B cell (primary cell): ENCODE measurements at regions of chr12 and their contacts with region 1.

Region 1: DNA sequence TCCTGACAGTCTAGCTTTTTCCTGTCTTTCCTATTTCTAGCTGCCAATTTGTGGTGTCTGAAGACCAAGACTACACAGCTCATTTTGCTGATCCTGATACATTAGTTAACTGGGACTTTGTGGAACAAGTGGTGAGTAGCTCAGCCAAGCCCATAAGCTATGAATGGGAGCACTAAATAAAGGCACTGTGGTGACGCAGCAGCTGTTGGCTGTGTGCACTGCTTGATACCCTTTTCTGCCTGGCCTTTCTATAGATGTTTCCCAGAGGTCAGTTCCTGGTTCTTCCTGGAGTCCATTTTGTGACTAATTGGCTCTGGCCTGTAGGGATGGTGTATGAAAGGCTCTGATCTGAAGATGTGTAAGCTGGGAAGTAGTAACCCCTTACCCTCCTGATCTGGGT is 20.5 kb downstream of the RNF10 start:
- DNase-seq: no peak
- ATAC-seq: no peak
- H3K4me3 ChIP-seq: no peak overlapping the region
- H3K4me3 Mint-ChIP-seq: no peak overlapping the region
- H3K27ac ChIP-seq: no peak overlapping the region
- H3K27ac Mint-ChIP-seq: no peak overlapping the region
- H3K4me1 ChIP-seq: peaks cover 0 to 5% of the 10 kb centered on the region in 2 donors
- H3K4me1 Mint-ChIP-seq: peaks cover 6% of the 10 kb centered on the region
- H3K27me3 ChIP-seq: no peaks in the 10 kb centered on the region
- H3K27me3 Mint-ChIP-seq: no peaks in the 10 kb centered on the region
- CTCF ChIP-seq: no peak

Region 2: DNA sequence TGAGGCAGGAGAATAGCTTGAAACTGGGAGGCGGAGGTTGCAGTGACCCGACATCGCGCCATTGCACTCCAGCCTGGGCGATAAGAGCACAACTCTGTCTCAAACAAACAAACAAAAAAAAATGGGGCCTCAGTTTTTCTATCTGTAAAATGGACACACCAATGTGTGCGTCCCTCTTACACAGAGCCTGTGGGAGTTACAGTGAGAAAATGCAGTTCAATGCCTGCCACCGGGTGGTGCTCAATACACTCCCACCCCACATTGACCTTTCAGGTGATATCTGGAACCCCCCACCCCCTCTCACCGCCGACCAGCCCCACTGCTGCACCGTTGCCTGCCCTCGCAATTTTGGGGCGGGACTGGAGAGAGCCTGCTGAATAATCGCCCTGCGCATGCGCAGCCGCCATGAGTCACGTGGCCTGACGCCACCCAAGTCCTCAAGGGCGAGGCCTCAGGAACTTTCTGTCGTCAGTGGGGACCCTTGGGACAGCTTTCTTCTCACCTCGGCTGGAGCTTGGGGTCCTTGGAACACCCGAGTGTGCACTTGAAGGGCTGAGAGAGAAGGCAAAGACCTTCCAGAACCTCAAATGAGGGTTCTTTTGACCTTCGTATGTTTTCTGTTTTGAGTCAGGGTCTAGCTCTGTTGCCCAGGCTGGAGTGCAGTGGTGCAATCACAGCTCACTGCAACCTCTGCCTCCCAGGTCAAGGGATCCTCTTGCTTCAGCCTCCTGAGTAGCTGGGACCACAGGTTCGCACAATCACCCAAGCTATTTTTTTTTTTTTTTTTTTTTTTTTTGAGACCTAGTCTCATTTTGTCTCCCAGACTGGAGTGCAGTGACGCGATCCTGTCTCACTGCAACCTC is 71.1 kb after region 1 on chr12:
- CTCF ChIA-PET with region 1: no interaction called
- POLR2A ChIA-PET with region 1: no interaction called
- intact Hi-C with region 1: loop called (anchors 2 kb)
- DNase-seq: peak; percentile 41
- ATAC-seq: peak; percentile 21
- H3K4me3 ChIP-seq: no peak overlapping the region
- H3K4me3 Mint-ChIP-seq: no peak overlapping the region
- H3K27ac ChIP-seq: no peak overlapping the region
- H3K27ac Mint-ChIP-seq: no peak overlapping the region
- H3K4me1 ChIP-seq: no peaks in the 10 kb centered on the region
- H3K4me1 Mint-ChIP-seq: no peaks in the 10 kb centered on the region
- H3K27me3 ChIP-seq: peaks cover 0 to 6% (median under 1%) of the 10 kb centered on the region in 4 experiments
- H3K27me3 Mint-ChIP-seq: peaks cover 12% of the 10 kb centered on the region
- CTCF ChIP-seq: no peak